Motor neuron (in vitro differentiated cells): ENCODE measurements at regions of chr7 and their contacts with region 1.

Region 1: DNA sequence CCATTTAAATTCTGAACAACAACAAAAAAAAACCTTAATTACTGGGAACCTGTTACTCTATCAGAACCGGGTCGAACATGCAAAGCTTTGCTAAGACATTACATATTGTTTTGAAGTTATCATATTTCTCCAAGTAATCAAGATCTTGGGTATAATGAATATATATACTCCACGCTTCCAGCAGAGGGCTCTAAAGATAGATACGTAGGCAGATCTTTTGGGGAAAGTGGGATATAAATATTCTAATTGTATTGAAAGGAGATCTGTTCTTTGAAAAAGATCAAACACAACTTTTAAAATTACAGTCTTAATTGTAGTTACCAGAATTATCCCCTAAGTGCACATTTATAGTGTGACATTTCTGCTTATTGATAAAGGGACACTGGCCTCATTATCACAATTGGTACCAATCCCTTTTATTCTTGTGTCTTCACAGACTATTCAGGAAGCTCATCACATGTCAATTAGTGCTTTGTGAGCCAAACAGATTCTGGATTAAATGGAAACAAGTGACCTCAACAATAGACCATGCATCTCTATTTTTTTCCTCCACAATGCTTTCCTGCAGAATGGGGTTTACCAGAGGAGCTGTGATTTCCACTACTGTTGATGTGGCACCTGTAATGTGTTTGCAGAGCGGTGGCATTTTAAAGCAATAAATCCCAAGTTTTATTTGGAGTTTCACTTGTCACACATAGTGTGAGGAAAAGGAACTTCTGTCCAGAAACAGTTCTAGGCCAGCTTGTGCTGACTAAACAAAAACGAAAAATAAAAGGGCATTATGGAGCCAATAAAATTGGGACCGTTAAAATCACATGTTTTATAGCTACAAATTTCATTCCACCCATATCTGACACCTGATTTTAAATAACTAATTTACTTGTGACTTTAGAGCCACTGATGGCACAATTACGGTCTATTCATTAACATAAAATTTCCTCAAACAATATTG is 122.4 kb downstream of the CTTNBP2 start:
- ATAC-seq: peak in 2 of 8 experiments; percentile 24 to 56
- H3K4me3 ChIP-seq: no peak overlapping the region
- H3K27ac ChIP-seq: no peak overlapping the region
- H3K4me1 ChIP-seq: peaks cover 0 to 8% of the 10 kb centered on the region in 2 donors

Region 2: DNA sequence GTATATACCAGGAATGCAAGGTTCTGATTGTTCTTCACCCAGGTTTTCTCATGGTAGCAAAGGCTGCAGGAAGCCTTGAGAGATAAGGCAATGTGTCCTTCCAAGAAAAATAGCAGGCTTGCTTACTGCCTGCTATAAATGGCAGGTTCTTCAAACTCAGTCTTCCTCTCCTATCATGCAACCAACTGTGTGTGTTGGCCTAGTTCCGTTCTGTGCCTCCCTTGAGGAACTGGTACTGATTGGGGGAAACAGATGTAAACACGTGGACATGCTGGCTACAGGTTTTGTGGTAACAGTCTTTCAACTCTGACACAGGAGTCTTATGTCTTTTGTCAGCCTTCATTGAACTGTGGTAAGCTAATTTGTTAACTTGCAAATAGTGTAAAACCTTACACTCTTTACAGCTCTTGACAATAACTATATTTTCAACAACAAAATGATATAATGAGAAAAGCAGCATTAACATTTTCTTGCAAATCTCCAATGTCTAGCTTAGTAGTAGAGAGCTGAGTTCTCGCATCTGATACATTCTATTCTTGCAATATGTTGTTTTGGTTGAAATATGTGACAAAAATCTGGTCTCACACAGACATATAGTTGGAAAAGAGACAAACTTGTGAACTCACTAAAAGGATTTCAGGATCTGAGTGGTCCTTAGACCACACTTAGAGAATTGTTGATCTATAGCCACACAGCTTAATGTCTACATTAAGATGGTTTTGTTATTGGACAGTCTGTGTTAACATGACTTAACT is 378.3 kb after region 1 on chr7:
- in situ Hi-C with region 1: loop called in 1 of 9 experiments (anchors 25 kb)
- ATAC-seq: no peak
- H3K4me3 ChIP-seq: no peak overlapping the region
- H3K27ac ChIP-seq: no peak overlapping the region
- H3K4me1 ChIP-seq: no peaks in the 10 kb centered on the region